ENCODE measurements at regions of chr16 and their contacts with region 1.

Region 1: DNA sequence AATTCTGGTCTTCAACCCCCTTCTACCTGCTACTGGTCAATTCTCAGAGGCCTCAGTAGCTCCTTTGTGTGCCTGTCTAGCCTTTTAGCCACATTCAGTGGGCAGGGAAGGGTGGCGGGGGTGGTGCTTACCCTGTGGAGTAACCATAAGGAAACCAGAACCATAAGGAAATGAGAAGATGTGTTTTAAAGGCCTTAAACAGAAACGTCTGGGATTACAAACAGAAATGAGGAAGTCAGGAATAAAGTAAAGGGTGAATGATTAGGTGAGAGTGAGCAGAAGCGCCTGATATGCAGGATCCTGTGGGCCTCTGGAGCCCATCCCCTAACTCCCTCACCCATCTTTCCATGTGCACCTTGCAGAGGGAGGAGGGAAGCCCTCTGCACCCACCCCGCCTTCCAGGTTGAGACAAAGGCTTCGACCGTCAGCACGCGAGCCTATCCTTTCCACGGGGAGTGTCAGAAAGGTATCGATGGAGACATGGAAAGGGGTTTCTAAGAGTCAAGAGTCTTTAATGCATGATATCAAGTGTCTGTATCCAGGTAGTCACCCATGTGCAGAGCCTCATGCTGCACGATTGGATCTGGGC is 20.4 kb downstream of the KIAA0513 start:
- DNase-seq: no peak
- ATAC-seq: no peak
- H3K4me3 ChIP-seq: no peak overlapping the region
- H3K27ac ChIP-seq: no peak overlapping the region
- H3K4me1 ChIP-seq: no peaks in the 10 kb centered on the region
- H3K27me3 ChIP-seq: no peaks in the 10 kb centered on the region
- CTCF ChIP-seq: no peak

Region 2: DNA sequence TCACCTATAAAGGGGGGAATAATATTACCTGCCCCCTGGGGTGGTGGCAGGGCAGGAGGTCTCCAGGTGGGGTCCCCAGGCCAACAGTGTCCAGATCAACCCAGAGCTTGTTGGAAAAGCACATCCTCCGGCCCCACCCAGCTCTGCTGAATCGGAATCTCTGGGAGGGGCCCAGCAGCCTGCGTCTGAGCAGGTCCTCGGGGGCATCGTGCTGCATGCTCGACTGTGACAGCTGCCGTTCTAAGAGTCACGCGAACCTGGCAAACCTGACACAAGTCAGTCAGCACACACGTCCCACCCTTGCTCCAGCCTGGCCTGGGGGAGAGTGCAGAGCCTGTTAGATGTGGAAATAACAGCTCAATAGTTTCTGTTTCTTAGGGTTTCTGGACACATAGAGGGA is 155.9 kb before region 1 on chr16:
- CTCF ChIA-PET with region 1: no interaction called
- POLR2A ChIA-PET with region 1: interaction called, 14 read pairs
- in situ Hi-C with region 1: no loop called
- intact Hi-C with region 1: no loop called
- DNase-seq: no peak
- ATAC-seq: no peak
- H3K4me3 ChIP-seq: no peak overlapping the region
- H3K27ac ChIP-seq: no peak overlapping the region
- H3K4me1 ChIP-seq: no peaks in the 10 kb centered on the region
- H3K27me3 ChIP-seq: no peaks in the 10 kb centered on the region
- CTCF ChIP-seq: no peak